Left cardiac atrium (tissue), 4 donors: ENCODE measurements at regions of chr3 and their contacts with region 1.

Region 1: GRCh38 chr3:50542177-50543034 is 25.1 kb downstream of the C3orf18 start:
- DNase-seq: peak; percentile 68
- ATAC-seq: peak; percentile 76 to 79

Region 2: GRCh38 chr3:50347194-50347918 is 195.1 kb before region 1 on chr3:
- intact Hi-C with region 1: loop called (anchors 2 to 5 kb)
- DNase-seq: peak; percentile 68
- ATAC-seq: no peak

Region 3: DNA sequence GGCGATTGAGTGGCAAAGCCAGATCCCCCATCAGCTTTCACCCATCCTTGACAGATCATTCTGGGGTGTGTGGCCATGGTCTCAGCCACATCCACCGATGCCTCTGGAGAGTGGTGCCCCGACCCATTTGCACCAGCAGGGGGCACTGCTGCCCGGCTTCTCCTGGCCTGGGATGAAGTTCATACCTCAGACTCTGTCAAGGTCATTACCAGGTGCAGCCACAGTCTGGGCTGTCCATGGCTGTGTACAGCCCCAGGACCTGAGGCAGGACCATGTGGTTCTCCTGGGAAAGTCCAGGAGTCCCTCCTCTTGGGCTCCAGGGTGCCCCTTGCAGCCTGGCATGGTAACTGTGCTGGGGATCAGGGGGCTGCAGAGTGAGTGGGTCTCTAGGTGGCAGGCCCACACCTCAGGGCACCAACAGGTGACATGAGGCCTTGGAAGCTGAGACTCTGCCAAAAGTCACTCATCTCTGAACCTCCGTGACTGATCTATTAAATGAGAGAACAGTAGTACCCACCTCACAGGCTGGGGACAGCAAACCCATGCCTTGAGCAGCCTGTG is 106.2 kb before region 1 on chr3:
- intact Hi-C with region 1: loop called (anchors 2 kb)
- DNase-seq: peak; percentile 63
- ATAC-seq: peak; percentile 83 to 87